Naive thymus-derived CD4-positive, alpha-beta T cell (primary cell): ENCODE measurements at regions of chr10 and their contacts with region 1.

Region 1: DNA sequence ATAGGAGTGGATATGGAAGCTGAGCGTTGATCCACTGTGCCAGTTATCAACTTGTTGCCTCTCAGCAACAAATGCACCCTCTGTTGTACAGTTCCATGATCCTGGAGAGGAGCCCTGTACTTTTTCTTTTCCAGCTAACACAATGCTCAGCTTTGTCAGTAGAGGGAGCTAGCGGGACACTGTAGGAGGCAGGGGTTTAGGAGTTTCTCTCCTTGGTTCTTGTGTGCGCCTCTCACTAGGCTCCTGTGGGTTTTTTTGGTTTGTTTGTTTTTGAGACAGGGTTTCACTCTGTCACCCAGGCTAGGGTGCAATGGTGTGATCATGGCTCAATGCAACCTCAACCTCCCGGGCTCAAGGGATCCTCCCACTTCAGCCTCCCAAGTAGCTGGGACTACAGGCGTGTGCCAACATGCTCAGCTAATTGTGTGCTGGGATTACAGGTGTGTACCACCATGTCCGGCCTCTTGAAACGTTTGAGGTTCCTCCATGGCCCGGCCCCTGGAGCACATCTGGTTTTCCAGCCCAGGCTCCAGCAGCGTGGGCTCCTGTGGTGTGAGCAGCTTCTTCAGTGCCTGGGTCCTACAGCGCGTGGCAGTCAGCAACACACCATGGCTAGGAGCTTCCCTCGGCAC is 12.0 kb upstream of the MARVELD1 start:
- DNase-seq: peak in 8 of 9 donors; percentile 35 to 66 (median 56)
- ATAC-seq: peak; percentile 97
- H3K4me3 ChIP-seq: no peak overlapping the region
- H3K4me3 Mint-ChIP-seq: no peak overlapping the region
- H3K27ac ChIP-seq: no peak overlapping the region
- H3K27ac Mint-ChIP-seq: no peak overlapping the region
- H3K4me1 ChIP-seq: no peaks in the 10 kb centered on the region
- H3K4me1 Mint-ChIP-seq: peaks cover 0 to 6% (median 0%) of the 10 kb centered on the region in 7 donors
- H3K27me3 ChIP-seq: no peaks in the 10 kb centered on the region
- H3K27me3 Mint-ChIP-seq: peaks cover 0 to 19% (median 6%) of the 10 kb centered on the region in 5 donors

Region 2: GRCh38 chr10:97676770-97677581 is 24.6 kb before region 1 on chr10:
- CTCF ChIA-PET with region 1: interaction called, 8 read pairs
- POLR2A ChIA-PET with region 1: no interaction called
- intact Hi-C with region 1: loop called in 1 of 2 experiments (anchors 1 kb)
- DNase-seq: peak; percentile 35 to 60 (median 48)
- ATAC-seq: peak; percentile 90
- H3K4me3 ChIP-seq: no peak overlapping the region
- H3K4me3 Mint-ChIP-seq: no peak overlapping the region
- H3K27ac ChIP-seq: no peak overlapping the region
- H3K27ac Mint-ChIP-seq: peak overlapping the region in 1 of 9 donors; percentile 13
- H3K4me1 ChIP-seq: no peaks in the 10 kb centered on the region
- H3K4me1 Mint-ChIP-seq: peaks cover 0 to 16% (median 0%) of the 10 kb centered on the region in 7 donors
- H3K27me3 ChIP-seq: no peaks in the 10 kb centered on the region
- H3K27me3 Mint-ChIP-seq: no peaks in the 10 kb centered on the region

Region 3: DNA sequence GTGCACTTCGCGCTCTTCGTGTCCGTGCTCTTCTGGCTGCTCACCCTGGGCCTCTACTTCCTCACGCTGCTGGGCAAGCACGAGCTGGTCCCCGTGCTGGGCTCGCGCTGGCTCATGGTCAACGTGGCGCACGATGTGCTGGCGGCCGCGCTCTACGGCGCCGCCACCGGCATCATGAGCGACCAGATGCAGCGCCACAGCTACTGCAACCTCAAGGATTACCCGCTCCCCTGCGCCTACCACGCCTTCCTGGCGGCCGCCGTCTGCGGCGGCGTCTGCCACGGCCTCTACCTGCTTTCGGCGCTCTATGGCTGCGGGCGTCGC is 12.5 kb after region 1 on chr10:
- CTCF ChIA-PET with region 1: interaction called, 7 read pairs
- POLR2A ChIA-PET with region 1: interaction called, 3 read pairs
- intact Hi-C with region 1: loop called in 1 of 2 experiments (anchors 2 kb)
- DNase-seq: peak in 8 of 9 donors; percentile 28 to 67 (median 40)
- ATAC-seq: peak; percentile 83
- H3K4me3 ChIP-seq: peak overlapping the region; percentile 69
- H3K4me3 Mint-ChIP-seq: peak overlapping the region; percentile 95 to 100 (median 99)
- H3K27ac ChIP-seq: no peak overlapping the region
- H3K27ac Mint-ChIP-seq: peak overlapping the region in 7 of 9 donors; percentile 44 to 95 (median 80)
- H3K4me1 ChIP-seq: peaks cover 5 to 6% of the 10 kb centered on the region in 2 donors
- H3K4me1 Mint-ChIP-seq: peaks cover 5 to 21% (median 11%) of the 10 kb centered on the region in 7 donors
- H3K27me3 ChIP-seq: no peaks in the 10 kb centered on the region
- H3K27me3 Mint-ChIP-seq: peaks cover 14 to 43% (median 19%) of the 10 kb centered on the region in 5 donors

Region 4: DNA sequence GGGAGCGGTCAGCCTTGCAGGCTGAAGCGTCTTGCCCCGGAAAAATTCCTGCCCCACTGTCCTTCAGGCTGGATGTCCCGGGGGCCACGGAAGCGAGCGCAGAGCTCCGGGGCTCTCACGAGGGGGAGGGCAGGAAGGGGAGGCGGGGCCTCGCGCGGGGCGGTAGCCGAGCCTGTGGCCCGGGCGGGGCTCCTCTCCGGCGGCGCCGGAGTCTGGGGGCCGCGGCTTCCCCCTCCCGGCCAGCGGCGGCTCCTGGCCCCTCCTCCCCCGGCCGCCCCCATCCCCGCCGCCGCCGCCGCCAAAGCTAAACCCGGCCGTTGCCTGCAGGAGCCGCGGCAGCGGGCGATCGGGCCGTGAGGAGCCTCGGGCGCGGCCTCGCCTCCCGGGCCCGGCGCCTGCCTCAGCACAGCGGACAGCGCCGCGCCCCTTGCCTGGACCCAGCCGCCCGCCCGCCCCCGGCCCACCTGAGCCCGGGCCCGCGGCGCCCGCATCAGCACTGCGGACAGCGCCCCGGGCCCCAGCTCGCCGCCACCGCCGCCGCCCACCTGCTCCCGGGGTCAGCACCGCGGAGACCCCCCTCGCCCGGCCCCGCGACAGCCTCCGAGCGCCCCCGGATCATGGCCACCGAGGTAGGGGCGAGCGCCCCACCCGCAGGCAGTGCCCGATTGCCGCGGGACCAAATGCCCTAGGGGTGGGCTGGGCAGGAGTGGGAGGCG is 148.3 kb after region 1 on chr10 and contains the start of gene GOLGA7B:
- CTCF ChIA-PET with region 1: interaction called, 4 read pairs
- POLR2A ChIA-PET with region 1: no interaction called
- intact Hi-C with region 1: loop called in 1 of 2 experiments (anchors 5 kb)
- DNase-seq: peak; percentile 43 to 70 (median 66)
- ATAC-seq: peak; percentile 87
- H3K4me3 ChIP-seq: peak within 1 kb of the TSS; percentile 74
- H3K4me3 Mint-ChIP-seq: peak within 1 kb of the TSS; percentile 84 to 94 (median 90)
- H3K27ac ChIP-seq: peak within 1 kb of the TSS; percentile 61
- H3K27ac Mint-ChIP-seq: peak within 1 kb of the TSS; percentile 70 to 93 (median 87)
- H3K4me1 ChIP-seq: peaks cover 25 to 32% of the 10 kb centered on the region in 2 donors
- H3K4me1 Mint-ChIP-seq: peaks cover 21 to 49% (median 37%) of the 10 kb centered on the region in 7 donors
- H3K27me3 ChIP-seq: no peaks in the 10 kb centered on the region
- H3K27me3 Mint-ChIP-seq: peaks cover 0 to 4% (median 0%) of the 10 kb centered on the region in 5 donors
- total RNA-seq, gene GOLGA7B: 5.8 to 8.5 (median 6.5) TPM

Region 5: GRCh38 chr10:98045785-98046389 is 344.3 kb after region 1 on chr10:
- CTCF ChIA-PET with region 1: interaction called, 5 read pairs
- POLR2A ChIA-PET with region 1: no interaction called
- intact Hi-C with region 1: loop called (anchors 1 to 10 kb)
- DNase-seq: peak; percentile 24 to 62 (median 53)
- ATAC-seq: peak; percentile 84
- H3K4me3 ChIP-seq: no peak overlapping the region
- H3K4me3 Mint-ChIP-seq: no peak overlapping the region
- H3K27ac ChIP-seq: no peak overlapping the region
- H3K27ac Mint-ChIP-seq: no peak overlapping the region
- H3K4me1 ChIP-seq: no peaks in the 10 kb centered on the region
- H3K4me1 Mint-ChIP-seq: peaks cover 0 to 6% (median 4%) of the 10 kb centered on the region in 7 donors
- H3K27me3 ChIP-seq: peaks cover 0 to 6% of the 10 kb centered on the region in 2 donors
- H3K27me3 Mint-ChIP-seq: peaks cover 29 to 41% (median 30%) of the 10 kb centered on the region in 5 donors